HEK293T (cell line): ENCODE measurements at regions of chr15 and their contacts with region 1.

Region 1: DNA sequence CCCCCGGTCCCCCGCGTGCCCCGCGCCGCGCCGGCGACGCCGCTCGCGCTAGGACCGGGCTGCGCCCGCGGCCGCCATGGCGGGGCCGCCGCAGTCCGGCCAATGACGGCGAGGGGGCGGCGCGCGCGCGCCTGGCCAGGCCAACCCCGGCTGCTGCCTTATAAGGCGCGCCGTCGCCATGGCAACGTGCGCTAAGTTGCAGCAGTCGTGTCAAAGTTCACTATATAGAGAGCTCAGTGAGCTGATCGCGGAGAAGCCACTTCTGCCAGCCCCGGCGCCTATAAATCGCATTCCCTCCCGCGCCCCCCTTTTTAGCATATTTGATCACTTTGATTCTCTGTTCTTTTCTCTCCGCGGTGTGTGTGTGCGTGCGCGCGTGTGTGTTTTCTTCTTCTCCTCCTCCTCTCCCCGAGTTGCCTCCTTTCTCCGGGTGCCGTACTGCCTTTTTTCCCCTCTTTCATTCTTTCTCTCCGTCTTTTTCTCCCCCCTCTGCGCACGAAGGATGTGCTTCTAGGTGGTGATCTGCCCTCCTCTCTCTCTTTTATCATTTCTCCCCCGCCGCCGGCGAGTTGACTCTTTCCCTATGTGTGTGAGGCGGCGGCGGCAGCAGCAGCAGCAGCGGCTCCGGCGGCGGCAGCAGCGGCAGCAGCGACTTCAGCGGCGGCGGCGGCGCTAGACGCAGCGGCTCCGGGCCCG is at the start of gene NR2F2:
- DNase-seq: peak; percentile 94

Region 2: DNA sequence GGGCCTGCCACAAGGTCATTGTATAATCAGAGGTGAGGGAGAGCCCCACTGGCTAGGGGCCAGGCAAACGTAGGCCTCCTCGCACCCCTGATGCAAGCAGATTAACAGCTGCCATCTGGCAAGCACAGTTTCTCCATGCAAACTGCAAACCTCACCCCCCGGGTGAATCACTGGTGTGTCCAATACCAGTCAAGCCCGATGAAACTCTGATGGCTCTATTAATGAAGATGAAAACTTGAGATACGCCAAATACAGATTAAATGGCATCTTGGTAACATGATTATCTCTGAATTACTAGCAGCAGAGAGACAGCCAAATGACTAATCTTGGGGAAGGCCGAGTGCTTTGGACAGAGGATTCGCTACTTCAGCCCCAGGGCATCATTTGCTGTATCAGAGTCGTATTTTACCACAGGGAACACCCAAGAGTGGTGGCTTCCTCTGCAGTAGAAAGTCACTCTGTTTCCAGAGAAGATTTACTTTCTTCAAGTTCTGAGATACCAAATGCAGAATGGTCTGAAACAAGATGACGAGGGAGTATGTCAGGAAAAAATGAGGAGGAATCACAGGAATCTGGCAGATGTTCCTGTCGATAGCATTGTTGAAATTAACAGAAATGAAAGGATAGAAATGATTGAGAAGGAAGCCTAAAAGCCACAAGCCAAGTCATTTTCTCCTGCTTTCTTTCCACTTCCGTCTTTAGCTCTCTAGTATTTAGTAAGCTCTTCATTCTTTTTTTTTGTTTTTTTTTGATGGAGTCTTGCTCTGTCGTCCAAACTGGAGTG is 96.3 kb before region 1 on chr15:
- CTCF ChIA-PET with region 1: no interaction called
- POLR2A ChIA-PET with region 1: no interaction called
- DNase-seq: no peak

Region 3: GRCh38 chr15:96340598-96341512 is 10.3 kb after region 1 on chr15:
- CTCF ChIA-PET with region 1: interaction called, 29 read pairs
- POLR2A ChIA-PET with region 1: interaction called, 44 read pairs
- DNase-seq: no peak

Region 4: DNA sequence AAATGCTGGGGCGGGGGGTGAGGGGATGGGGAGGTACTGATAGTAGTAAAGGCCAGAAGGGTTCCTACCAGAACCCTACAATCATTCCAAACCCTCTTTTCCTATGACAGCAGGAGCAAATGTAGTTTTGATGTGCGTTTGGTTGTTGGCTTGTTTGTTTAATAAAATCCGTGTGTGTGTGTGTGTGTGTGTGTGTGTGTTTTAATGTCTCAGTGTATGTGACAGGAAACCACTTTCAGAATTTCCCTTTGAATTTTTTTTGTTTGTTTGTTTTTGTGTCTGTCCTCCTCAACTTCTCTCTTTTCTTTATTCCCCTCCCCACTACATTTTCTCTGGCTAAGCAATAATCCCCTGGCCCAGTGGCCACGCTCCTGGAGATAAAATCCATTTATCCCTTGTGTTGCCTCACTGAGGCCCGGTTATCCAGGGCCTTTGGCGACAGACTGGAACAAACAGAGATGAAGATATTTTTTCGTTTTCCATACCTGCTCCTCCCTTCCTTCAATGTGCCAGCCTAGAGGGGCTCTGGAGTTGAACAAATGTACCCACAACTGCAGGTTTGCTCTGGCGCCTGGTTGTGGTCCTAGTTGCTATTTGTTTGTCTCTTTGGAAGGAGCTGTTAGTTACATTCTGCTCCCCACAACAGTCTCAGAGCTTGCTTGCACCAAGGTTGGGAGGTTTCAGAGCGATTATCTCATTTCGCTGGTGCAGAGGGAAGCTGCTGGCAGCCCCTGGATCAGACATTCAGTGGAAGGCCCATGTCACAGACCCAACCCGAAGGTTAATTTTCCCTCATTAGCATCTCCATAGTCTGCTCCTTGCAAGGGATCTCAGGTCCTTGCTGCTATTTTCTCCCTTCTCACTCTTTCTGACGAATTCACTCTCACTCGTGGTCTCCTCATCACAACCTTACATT is 17.8 kb after region 1 on chr15:
- CTCF ChIA-PET with region 1: interaction called, 29 read pairs
- POLR2A ChIA-PET with region 1: interaction called, 44 read pairs
- DNase-seq: no peak